Posterior cingulate gyrus (tissue), 11 donors: ENCODE measurements at regions of chr11 and their contacts with region 1.

Region 1: DNA sequence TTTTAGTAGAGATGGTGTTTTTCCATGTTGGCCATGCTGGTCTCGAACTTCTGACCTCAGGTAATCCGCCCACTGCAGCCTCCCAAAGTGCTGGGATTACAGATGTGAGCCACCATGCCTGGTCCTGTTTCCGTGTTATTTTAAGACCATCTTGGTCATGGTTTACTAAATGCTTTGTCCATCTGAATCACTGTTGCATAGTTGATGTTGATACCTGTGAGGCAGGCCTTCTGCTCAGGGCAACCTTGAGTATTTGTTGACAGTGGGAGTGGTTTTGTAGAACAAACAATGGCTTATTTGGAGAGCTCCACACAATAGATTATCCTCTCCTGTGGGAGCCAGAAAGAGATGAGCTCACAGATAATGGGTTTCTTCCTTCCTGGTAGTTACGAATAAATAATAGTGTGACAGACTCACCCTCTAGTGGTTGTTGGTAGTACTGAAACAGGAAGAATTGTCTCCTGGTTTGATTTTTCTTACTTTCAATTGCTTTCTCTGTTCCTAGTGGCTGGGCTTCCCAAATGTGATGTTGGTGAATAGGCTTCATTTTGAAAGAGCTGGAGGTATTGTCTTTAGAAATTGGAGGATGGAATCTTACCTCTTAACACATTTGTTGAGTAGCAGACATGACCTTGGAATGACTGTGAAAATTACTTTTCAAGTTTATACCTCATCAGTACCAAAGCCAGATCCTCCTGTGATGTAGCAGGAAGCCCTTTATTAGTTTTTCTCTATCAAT is 39.0 kb downstream of the CTNND1 start:
- DNase-seq: peak in 1 of 10 donors; percentile 61

Region 2: DNA sequence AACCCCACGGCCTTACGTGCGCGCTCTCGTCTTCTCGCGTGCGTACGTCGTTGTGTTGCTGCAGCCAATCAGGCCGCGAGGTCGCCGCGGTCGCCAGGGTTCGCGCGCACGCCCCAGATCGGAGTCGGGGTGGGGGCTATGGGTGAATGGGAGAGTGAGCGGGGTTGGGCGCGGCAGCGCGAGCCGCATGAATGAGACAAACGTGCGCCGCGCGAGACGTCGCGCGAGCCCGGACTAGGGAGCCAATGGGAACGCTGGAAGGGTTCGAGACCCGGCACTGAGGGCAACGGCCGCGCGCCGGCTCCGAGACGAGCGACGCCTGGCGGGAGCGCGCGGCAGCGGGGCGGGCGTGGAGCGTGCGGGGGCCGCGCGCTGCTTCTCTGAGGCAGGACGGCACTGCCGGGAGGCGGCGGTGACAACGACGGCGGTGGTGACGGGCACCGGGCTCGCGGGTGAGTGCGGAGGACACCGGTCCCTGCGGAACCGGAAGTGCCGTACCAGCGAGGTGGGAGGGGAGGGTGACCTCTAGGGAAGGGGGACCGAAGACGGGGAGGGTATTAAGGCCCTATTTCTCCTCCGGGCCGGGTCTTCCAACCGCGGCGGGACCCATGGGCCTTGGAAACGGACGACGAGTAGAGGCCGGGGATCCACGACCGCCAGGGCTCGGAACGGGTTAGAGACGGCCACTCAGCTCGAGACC is 132.7 kb before region 1 on chr11 and contains the start of gene ZDHHC5:
- intact Hi-C with region 1: loop called (anchors 1 kb)
- DNase-seq: peak; percentile 98 to 100 (median 100)

Region 3: DNA sequence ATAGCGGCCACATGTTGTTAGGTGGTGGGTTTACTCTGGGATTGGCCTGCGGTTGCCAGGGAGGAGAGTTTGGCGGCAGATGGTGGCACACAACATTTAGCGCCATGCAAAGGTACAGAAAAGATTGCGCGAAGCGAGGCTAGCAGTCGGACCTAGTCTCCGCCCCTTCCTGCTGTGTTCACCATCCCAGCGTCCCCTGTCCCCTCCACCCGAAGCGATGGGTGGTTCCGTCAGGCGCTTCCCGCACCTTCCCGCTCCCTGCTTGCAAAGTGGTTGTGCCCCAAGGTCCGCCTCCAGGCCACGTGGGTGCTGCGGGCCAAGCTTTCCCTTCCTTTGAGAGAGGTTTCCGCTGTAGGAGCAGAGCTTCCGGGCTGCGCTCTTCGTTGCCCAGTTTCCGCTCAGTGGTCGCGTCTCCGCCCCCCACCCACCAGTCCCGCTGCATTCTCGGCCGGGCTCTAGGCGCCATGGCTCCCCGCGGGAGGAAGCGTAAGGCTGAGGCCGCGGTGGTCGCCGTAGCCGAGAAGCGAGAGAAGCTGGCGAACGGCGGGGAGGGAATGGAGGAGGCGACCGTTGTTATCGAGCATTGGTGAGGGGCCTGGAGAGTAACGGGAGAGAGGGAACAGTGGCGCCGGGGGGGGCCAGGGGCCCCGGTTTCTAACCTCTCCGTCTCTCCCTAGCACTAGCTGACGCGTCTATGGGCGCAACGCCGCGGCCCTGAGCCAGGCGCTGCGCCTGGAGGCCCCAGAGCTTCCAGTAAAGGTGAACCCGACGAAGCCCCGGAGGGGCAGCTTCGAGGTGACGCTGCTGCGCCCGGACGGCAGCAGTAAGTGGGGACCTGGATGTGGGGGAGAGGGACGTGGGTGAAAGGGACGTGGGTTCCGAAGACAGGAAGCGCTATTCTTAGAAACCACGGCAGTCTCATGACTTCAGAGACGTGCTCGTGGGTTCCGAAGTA is 59.2 kb before region 1 on chr11 and contains the start of gene SELENOH:
- intact Hi-C with region 1: no loop called
- DNase-seq: peak; percentile 89 to 100 (median 97)

Region 4: DNA sequence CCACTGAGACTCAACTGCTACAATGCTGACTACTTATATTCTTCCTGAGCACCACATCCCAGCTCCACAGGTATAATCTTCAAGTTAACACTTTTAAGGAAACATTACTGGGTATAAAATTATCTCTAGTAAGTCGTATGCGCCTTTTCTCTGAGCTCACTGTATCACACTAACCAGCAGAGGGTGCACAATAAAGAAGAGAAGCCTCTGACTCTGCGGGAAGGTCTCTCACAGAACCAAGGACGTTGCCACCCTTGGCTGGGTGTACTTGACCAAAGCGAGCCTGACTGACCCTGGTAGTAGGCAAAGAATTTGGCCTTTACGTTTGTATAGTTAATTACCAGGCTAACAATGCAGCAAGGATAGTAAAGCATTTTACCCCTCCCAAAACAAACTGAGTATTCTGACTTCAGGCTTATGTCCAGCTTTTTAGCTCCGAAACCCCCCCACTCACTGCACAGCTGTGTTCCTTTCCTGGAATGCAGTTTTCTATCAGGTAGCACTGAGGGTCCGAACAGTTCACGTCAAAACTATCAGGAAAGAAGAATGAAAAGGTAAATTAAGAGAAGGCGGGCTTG is 48.8 kb before region 1 on chr11 and contains the start of gene BTBD18:
- intact Hi-C with region 1: loop called (anchors 5 kb)
- DNase-seq: no peak

Region 5: GRCh38 chr11:57913715-57914704 is 113.4 kb after region 1 on chr11:
- intact Hi-C with region 1: no loop called
- DNase-seq: no peak